ENCODE measurements at regions of chr2 and their contacts with region 1.

Region 1: DNA sequence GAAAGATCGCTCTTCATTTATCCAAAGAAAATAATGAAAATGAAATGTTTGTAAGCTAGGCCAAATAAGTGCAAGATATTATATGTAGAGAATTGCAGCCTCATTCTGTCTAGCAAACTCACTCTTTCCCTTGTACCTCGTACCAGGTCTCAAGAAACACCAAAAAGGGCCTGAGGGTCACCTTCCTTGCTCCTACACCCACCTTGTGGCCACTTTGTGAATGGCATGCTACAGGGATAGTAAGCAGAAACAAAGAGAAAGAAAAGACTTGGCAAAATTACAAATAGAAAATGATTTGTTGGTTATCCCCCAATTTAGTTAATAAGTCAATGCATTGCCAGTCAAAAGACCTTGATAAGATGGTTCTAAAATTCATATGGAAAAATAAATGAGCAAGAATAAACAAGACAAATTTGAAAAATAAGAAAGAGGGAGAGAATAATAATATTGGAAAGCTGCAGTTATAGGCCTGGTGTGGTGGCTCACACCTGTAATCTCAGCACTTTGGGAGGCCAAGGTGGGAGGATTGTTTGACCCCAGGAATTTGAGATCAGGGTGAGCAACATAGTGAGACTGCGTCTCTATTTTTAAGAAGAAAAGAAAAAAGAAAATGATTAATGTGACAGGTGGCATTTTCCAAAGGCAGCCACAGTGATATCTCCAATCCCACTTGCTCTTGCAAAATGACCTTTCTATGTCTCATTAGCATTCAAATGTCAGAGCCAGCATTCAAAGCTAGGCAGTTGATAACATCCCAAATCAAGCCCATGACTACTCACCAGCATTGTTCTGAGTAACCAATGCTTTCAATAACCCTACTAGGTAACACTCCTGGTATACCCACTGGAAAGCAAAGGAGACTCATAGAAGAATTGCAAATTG is 38.8 kb upstream of the BMP10 start:
- DNase-seq: peak; percentile 25 to 73
- ATAC-seq: peak in 5 of 8 donors; percentile 62 to 84 (median 71)
- H3K4me3 ChIP-seq: no peak overlapping the region
- H3K27ac ChIP-seq: no peak overlapping the region
- H3K4me1 ChIP-seq: peaks cover 0 to 45% (median 8%) of the 10 kb centered on the region in 9 donors
- H3K27me3 ChIP-seq: peaks cover 0 to 12% (median 0%) of the 10 kb centered on the region in 7 donors
- CTCF ChIP-seq: peak; percentile 88 to 96 (median 93)

Region 2: GRCh38 chr2:68709421-68709911 is 200.6 kb before region 1 on chr2:
- intact Hi-C with region 1: loop called in 6 of 10 experiments (anchors 2 to 5 kb)
- DNase-seq: no peak
- ATAC-seq: peak in 7 of 8 donors; percentile 61 to 77 (median 63)
- H3K4me3 ChIP-seq: no peak overlapping the region
- H3K27ac ChIP-seq: no peak overlapping the region
- H3K4me1 ChIP-seq: peaks cover 0 to 9% (median 0%) of the 10 kb centered on the region in 9 donors
- H3K27me3 ChIP-seq: peaks cover 0 to 3% (median 0%) of the 10 kb centered on the region in 7 donors
- CTCF ChIP-seq: peak; percentile 33 to 87 (median 75)

Region 3: DNA sequence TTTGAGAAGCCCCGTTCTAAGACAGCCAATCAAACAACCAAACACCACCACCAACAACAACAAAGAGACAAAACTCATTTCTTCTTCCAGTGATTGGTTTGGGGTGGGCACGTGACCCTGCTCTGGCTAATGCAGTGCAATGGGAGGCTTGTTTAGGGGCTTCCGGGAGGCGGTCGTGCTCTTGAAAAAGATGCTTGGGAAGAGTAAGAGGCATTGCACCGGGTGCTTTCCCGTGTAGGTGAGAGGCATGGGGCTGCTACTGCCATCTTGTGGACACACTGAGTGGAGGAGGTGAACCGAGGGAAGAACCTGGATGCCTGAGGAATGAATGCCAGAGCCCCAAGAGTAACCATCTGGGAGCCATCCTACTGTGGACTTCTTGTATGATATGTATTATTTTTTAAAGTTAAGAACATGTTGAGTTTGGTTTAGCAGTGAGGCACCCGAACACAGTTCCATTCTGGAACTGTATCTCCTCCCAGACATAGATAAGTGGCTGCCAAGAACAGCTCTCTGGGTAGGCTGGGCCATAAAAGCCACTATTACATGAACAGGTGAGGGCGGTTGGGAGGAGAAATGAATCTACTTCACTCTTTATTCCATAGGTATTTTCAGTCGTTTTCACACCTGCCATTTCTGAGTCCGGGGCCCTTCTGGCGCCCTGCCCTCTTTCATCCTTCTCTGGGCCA is 194.5 kb before region 1 on chr2:
- intact Hi-C with region 1: loop called in 2 of 10 experiments (anchors 2 to 5 kb)
- DNase-seq: no peak
- ATAC-seq: peak in 5 of 8 donors; percentile 31 to 73 (median 54)
- H3K4me3 ChIP-seq: no peak overlapping the region
- H3K27ac ChIP-seq: peak overlapping the region in 1 of 10 donors; percentile 70
- H3K4me1 ChIP-seq: peaks cover 0 to 36% (median 0%) of the 10 kb centered on the region in 9 donors
- H3K27me3 ChIP-seq: peaks cover 0 to 16% (median 0%) of the 10 kb centered on the region in 7 donors
- CTCF ChIP-seq: peak; percentile 22 to 71 (median 62)

Region 4: DNA sequence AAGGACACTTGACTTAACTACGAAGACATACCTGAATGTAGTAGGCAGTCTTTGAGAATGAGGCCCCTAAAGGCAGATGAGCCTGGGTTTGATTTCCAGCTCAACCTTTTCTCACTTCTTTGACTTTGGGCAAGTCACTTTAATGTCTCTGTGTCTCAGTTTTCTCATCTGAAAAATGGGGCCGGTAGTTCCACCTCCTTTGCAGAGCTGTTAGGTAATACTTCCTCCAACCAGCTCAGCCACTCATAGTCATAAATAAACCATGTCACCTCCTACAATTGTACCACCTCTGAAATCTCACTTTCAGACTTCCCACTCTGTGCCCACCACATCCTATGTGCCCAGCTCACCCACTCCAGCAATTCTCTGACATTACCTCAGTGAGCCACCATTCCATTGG is 165.0 kb before region 1 on chr2:
- intact Hi-C with region 1: loop called in 8 of 10 experiments (anchors 2 to 5 kb)
- DNase-seq: no peak
- ATAC-seq: no peak
- H3K4me3 ChIP-seq: no peak overlapping the region
- H3K27ac ChIP-seq: peak overlapping the region in 1 of 10 donors; percentile 94
- H3K4me1 ChIP-seq: peaks cover 0 to 89% (median 0%) of the 10 kb centered on the region in 9 donors
- H3K27me3 ChIP-seq: peaks cover 0 to 5% (median 0%) of the 10 kb centered on the region in 7 donors
- CTCF ChIP-seq: no peak

Region 5: GRCh38 chr2:68751397-68752339 is 158.4 kb before region 1 on chr2:
- intact Hi-C with region 1: loop called (anchors 1 to 5 kb)
- DNase-seq: peak; percentile 88 to 92
- ATAC-seq: peak; percentile 92 to 97 (median 94)
- H3K4me3 ChIP-seq: peak overlapping the region in 3 of 10 donors; percentile 23 to 32 (median 30)
- H3K27ac ChIP-seq: peak overlapping the region in 4 of 10 donors; percentile 0 to 45 (median 16)
- H3K4me1 ChIP-seq: peaks cover 0 to 80% (median 25%) of the 10 kb centered on the region in 9 donors
- H3K27me3 ChIP-seq: no peaks in the 10 kb centered on the region
- CTCF ChIP-seq: peak; percentile 82 to 98 (median 94)

Region 6: DNA sequence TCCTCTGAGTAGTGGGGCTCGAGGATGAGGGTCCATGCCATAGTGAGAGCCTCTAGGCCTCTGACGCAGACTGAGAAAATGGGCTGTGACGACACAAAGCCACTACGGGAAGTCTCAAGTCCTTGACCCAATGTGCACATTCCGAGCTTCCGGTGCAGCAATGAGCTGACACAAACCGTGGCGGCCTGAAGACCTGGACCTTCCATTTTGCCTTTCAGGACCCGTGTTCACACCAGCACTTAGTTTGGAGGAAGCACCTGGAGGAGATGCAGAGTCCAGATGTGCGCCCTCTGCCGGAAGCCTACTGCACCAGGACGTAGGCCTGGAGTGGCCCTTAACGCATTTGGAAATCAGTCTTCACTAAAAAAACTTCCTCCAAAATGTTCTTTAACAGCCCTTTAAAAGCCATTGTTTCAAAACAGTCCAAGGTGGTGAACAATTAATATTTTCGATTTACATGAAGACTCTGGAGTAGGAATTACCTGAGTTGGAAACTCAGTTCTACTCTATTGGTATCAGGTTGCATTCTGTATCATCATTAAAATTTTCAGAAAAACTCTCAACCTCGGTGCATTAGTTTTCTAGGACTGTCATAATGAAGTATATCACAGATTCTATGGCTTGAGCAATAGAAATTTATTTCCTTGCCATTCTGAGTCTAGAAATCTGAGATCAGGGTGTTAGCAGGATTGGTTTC is 72.7 kb before region 1 on chr2:
- intact Hi-C with region 1: loop called in 4 of 10 experiments (anchors 5 kb)
- DNase-seq: peak; percentile 73 to 76
- ATAC-seq: peak in 7 of 8 donors; percentile 60 to 82 (median 65)
- H3K4me3 ChIP-seq: no peak overlapping the region
- H3K27ac ChIP-seq: peak overlapping the region in 2 of 10 donors; percentile 43 to 90
- H3K4me1 ChIP-seq: peaks cover 0 to 56% (median 13%) of the 10 kb centered on the region in 9 donors
- H3K27me3 ChIP-seq: no peaks in the 10 kb centered on the region
- CTCF ChIP-seq: peak; percentile 42 to 82 (median 66)